Posterior vena cava (tissue), 2 donors: ENCODE measurements at regions of chr4 and their contacts with region 1.

Region 1: GRCh38 chr4:77819843-77820648 is 878 bp upstream of the CNOT6L start:
- DNase-seq: peak; percentile 97

Region 2: DNA sequence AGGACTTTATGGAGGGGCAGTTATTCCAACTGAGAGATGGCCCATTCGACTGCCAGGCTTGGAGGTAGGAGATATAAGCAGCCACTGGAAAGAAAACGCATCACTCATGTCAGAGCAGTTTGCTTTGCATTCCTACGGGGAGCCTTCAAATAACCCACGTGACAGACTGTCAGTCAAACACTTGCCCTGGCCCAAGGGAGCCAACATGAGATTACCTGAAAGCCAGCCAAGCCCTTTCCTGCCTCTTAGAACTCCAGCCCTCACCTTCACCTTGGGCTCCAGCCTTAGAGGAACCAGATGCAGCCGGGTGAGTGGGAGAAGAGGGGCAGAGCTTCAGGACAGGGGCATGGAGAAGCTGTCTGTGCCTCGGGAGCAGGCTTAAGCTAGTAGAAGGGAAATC is 309.7 kb before region 1 on chr4:
- intact Hi-C with region 1: loop called in 1 of 2 experiments (anchors 5 kb)
- DNase-seq: no peak

Region 3: GRCh38 chr4:77862478-77863216 is 42.6 kb after region 1 on chr4 and contains the start of gene MRPL1:
- intact Hi-C with region 1: loop called in 1 of 2 experiments (anchors 2 kb)
- DNase-seq: peak; percentile 96
- total RNA-seq, gene MRPL1: 38.4 to 45.3 TPM